ENCODE measurements at regions of chr2 and their contacts with region 1.

Region 1: GRCh38 chr2:31333527-31334183 is 80.9 kb downstream of the XDH start:
- DNase-seq: peak; percentile 52 to 94 (median 86)

Region 2: GRCh38 chr2:31163011-31163539 is 170.6 kb before region 1 on chr2:
- intact Hi-C with region 1: no loop called
- DNase-seq: no peak

Region 3: GRCh38 chr2:31255911-31256571 is 77.6 kb before region 1 on chr2:
- intact Hi-C with region 1: loop called (anchors 10 kb)
- DNase-seq: no peak

Measured in head of caudate nucleus (tissue), 42 donors.